ENCODE measurements at regions of chr10 and their contacts with region 1.

Region 1: DNA sequence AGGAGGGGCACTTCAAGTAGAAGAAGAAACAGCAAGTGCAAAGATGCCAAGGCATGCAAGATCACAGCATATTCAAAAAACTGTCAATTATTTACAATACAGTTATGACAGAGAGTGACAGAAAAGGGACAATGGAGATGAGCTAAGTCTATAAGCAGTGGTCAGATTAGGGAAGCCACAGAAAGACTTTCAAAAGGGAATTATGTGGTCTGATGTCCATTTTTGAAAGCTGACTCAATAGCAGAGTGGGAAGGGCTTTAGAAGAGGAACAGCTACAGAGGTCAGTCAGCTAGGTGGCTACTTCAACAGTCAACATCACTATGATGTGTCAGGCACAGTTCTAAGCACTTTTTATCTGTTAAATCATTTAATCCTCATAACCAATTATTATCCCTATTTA is 45.2 kb upstream of the SPOCK2 start:
- DNase-seq: no peak
- ATAC-seq: no peak
- H3K4me3 Mint-ChIP-seq: no peak overlapping the region
- H3K27ac Mint-ChIP-seq: no peak overlapping the region
- H3K4me1 Mint-ChIP-seq: peaks cover 52% of the 10 kb centered on the region
- H3K27me3 Mint-ChIP-seq: no peaks in the 10 kb centered on the region

Region 2: GRCh38 chr10:72204296-72204695 is 70.8 kb after region 1 on chr10:
- CTCF ChIA-PET with region 1: no interaction called
- POLR2A ChIA-PET with region 1: no interaction called
- DNase-seq: no peak
- ATAC-seq: no peak
- H3K4me3 Mint-ChIP-seq: no peak overlapping the region
- H3K27ac Mint-ChIP-seq: no peak overlapping the region
- H3K4me1 Mint-ChIP-seq: peaks cover 12% of the 10 kb centered on the region
- H3K27me3 Mint-ChIP-seq: no peaks in the 10 kb centered on the region

Region 3: GRCh38 chr10:72215652-72216549 is 82.4 kb after region 1 on chr10 and contains the starts of genes ANAPC16 and ASCC1:
- CTCF ChIA-PET with region 1: interaction called, 22 read pairs
- POLR2A ChIA-PET with region 1: interaction called, 3 read pairs
- DNase-seq: peak; percentile 95
- ATAC-seq: peak; percentile 88
- H3K4me3 Mint-ChIP-seq: peak within 1 kb of the TSS; percentile 96
- H3K27ac Mint-ChIP-seq: peak within 1 kb of the TSS; percentile 96
- H3K4me1 Mint-ChIP-seq: peaks cover 52% of the 10 kb centered on the region
- H3K27me3 Mint-ChIP-seq: no peaks in the 10 kb centered on the region
- total RNA-seq, gene ANAPC16: 72.9 TPM
- total RNA-seq, gene ASCC1: 34.8 to 40.3 TPM

Region 4: DNA sequence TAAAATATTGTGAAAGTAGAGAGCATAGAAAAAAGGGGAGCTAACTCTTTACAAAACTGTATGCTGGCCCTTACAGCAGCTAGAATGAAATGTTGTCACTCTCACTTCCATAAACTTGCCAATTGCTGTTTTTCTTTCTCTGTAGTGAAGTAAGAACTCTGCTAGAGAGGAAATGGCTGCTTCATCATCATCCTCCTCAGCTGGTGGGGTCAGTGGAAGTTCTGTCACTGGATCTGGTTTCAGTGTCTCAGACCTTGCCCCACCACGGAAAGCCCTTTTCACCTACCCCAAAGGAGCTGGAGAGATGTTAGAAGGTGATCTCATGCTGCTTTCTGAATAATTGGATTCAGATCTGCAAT is 90.2 kb after region 1 on chr10:
- CTCF ChIA-PET with region 1: interaction called, 22 read pairs
- POLR2A ChIA-PET with region 1: interaction called, 3 read pairs
- DNase-seq: no peak
- ATAC-seq: peak; percentile 22
- H3K4me3 Mint-ChIP-seq: peak overlapping the region; percentile 24
- H3K27ac Mint-ChIP-seq: peak overlapping the region; percentile 65
- H3K4me1 Mint-ChIP-seq: peaks cover 51% of the 10 kb centered on the region
- H3K27me3 Mint-ChIP-seq: no peaks in the 10 kb centered on the region